MCF 10A (cell line): ENCODE measurements at regions of chr12 and their contacts with region 1.

Region 1: GRCh38 chr12:32455607-32456071 is 56.3 kb downstream of the FGD4 start:
- DNase-seq: peak; percentile 75
- H3K4me3 Mint-ChIP-seq: peak overlapping the region; percentile 48
- H3K27ac Mint-ChIP-seq: peak overlapping the region; percentile 91
- H3K4me1 Mint-ChIP-seq: peaks cover 60% of the 10 kb centered on the region
- H3K27me3 Mint-ChIP-seq: no peaks in the 10 kb centered on the region
- CTCF ChIP-seq: peak; percentile 78

Region 2: DNA sequence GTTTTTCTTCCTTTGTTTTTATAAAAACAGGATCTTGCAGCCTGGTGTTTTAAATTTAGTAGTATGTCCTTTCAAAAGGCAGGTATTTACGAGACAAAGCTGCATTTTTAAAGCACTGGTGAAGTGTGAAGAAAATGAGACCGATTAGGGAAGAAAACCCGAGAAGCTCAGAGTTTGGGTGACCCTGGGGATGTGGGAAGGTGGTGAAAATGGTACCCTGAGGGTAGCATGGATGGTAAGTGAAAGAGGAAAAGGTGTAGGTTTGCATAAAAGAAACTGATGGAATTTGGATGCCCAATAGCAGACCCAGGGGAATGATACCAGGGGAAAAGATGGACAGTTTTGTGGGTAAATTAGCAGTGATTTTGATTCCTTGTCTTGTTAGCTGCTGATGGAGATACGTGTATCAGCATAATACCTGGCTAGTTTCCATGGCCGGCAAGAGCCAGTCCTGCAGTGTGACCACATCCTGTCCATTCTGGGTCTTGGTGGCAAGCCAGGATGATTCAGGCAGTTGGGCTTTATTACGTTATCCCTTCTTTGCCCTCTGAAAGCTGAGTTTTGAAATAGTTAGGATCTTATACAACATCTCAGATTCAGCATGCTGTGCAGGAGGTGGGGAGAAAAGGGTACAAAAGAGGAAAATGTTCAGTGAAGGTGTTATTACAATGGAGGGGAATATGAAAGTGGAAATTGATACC is 340.1 kb before region 1 on chr12:
- CTCF ChIA-PET with region 1: no interaction called
- POLR2A ChIA-PET with region 1: no interaction called
- intact Hi-C with region 1: loop called (anchors 10 kb)
- DNase-seq: peak; percentile 99
- H3K4me3 Mint-ChIP-seq: peak overlapping the region; percentile 5
- H3K27ac Mint-ChIP-seq: peak overlapping the region; percentile 59
- H3K4me1 Mint-ChIP-seq: peaks cover 26% of the 10 kb centered on the region
- H3K27me3 Mint-ChIP-seq: no peaks in the 10 kb centered on the region
- CTCF ChIP-seq: no peak

Region 3: GRCh38 chr12:32399337-32400113 is 56.1 kb before region 1 on chr12 and contains the start of gene FGD4:
- CTCF ChIA-PET with region 1: interaction called, 3 read pairs
- POLR2A ChIA-PET with region 1: interaction called, 63 read pairs
- intact Hi-C with region 1: loop called (anchors 1 kb)
- DNase-seq: peak; percentile 96
- H3K4me3 Mint-ChIP-seq: peak within 1 kb of the TSS; percentile 79
- H3K27ac Mint-ChIP-seq: peak within 1 kb of the TSS; percentile 92
- H3K4me1 Mint-ChIP-seq: peaks cover 19% of the 10 kb centered on the region
- H3K27me3 Mint-ChIP-seq: no peaks in the 10 kb centered on the region
- CTCF ChIP-seq: peak; percentile 41
- total RNA-seq, gene FGD4: 32.5 and 34.7 TPM in 2 replicates

Region 4: DNA sequence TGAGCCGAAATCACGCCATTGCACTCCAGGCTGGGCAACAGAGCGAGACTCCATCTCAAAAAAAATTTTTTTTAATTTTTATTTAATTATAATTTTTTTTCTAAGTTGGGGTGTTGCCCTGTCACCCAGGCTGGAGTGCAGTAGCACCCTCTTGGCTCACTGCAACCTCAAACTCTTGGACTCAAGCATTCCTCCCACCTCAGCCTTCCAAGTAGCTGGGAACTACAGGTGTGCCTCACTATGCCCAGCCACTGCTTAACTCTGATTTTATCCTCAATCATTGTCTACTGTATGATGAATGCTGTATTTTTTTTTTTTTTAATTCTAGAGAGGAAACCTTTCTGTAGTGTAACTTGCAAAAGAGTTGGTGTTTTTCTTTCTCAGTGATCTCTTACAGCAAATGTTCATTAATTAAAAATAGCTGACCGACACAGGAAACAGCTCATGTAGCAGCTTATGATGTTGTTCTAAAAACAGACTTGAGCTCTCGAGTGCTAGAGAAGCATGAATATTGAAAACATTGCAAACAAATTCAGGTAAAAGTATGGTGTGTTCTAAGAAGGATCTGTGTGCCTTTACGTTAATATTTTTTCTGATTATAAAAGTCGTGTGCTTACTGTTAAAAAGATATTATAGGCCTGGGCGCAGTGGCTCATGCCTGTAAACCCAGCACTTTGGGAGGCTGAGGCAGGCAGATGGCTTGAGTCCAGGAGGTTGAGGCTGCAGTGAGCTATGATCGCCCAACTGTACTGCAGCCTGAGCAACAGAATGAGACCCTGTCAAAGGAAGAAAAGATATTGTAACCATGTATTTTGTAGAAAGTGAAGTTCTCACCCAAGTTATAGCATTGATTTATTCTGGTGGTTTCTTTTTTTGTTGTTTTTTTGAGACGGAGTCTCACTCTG is 12.6 kb after region 1 on chr12:
- CTCF ChIA-PET with region 1: interaction called, 4 read pairs
- POLR2A ChIA-PET with region 1: interaction called, 13 read pairs
- intact Hi-C with region 1: no loop called
- DNase-seq: no peak
- H3K4me3 Mint-ChIP-seq: no peak overlapping the region
- H3K27ac Mint-ChIP-seq: no peak overlapping the region
- H3K4me1 Mint-ChIP-seq: peaks cover 6% of the 10 kb centered on the region
- H3K27me3 Mint-ChIP-seq: no peaks in the 10 kb centered on the region
- CTCF ChIP-seq: no peak

Region 5: DNA sequence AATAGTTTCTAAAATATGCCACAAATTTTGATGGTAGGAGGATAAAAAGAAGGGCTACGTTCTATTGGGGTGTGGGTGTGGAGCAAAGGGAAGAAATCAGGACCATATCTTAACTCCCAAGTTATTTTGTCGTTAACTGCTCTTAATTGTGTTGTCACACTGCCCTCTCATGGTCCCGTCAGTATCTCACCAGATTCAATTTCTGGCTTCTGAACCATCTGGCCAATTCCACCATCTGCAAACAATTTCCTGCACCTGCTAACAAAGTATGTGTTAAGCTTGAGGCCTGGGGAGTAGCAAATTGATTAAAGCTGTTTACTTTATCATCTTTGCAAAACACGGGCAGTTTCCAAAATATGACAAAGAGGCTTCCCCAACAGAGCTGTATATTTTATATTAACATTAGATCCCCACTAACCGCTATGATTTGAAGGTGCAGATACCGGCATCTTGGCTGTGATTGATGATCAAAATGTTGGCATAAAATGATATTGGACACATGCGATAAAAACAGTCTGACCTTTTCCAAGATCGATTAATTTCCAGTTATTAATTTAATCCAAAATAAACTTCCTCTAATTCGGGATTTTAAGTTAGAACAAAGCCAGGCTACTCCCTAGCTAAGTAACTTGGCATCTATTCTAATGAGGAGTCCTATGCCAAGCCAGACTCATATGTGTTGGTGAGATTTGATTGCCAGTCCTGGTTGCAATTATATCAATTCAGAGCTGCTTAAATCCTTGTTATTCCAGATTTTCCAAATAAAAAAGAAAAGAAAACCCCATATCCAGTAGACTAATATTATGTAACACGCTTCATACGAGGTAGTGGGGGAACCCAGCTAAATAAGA is 216.5 kb after region 1 on chr12:
- CTCF ChIA-PET with region 1: interaction called, 11 read pairs
- POLR2A ChIA-PET with region 1: no interaction called
- intact Hi-C with region 1: loop called (anchors 1 kb)
- DNase-seq: peak; percentile 70
- H3K4me3 Mint-ChIP-seq: no peak overlapping the region
- H3K27ac Mint-ChIP-seq: no peak overlapping the region
- H3K4me1 Mint-ChIP-seq: no peaks in the 10 kb centered on the region
- H3K27me3 Mint-ChIP-seq: no peaks in the 10 kb centered on the region
- CTCF ChIP-seq: peak; percentile 62

Region 6: DNA sequence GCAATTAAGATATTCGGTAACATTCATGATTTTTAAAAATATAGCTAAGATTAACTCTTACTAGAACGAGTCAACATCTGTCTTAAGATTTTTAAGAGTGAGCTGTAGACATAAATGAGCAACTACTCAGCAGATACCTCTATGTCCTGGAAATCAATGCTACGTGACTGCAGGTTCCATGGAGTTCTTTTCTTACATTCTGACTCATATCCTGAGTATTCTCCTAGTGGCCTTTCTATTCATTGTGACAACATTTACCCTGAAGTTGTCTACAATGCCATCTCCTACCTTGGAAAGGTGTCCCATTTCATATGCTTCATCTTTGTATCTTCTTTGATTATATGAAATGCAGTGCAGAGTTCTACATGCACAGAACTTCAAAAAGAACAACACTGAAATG is 381.1 kb after region 1 on chr12:
- CTCF ChIA-PET with region 1: no interaction called
- POLR2A ChIA-PET with region 1: no interaction called
- intact Hi-C with region 1: no loop called
- DNase-seq: no peak
- H3K4me3 Mint-ChIP-seq: no peak overlapping the region
- H3K27ac Mint-ChIP-seq: no peak overlapping the region
- H3K4me1 Mint-ChIP-seq: peaks cover 4% of the 10 kb centered on the region
- H3K27me3 Mint-ChIP-seq: no peaks in the 10 kb centered on the region
- CTCF ChIP-seq: no peak

Region 7: DNA sequence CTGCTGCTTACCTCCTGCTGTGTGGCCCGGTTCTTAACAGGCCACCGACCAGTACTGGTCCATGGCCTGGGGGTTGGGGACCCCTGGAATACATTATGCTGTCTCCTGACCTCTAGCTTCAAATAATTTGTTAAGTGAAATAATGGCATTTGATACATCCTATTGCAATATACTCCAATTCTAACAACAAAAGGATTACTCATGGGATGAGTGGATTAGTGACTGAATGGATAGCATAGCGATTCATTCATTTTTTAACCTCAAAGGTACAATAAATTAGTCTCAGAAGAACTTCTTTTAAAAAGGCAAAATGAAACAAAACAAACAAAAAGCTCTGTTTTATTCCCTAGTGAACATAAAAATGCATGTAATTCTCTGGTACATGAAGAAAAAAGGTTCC is 588.8 kb after region 1 on chr12:
- CTCF ChIA-PET with region 1: no interaction called
- POLR2A ChIA-PET with region 1: no interaction called
- intact Hi-C with region 1: no loop called
- DNase-seq: no peak
- H3K4me3 Mint-ChIP-seq: no peak overlapping the region
- H3K27ac Mint-ChIP-seq: no peak overlapping the region
- H3K4me1 Mint-ChIP-seq: no peaks in the 10 kb centered on the region
- H3K27me3 Mint-ChIP-seq: no peaks in the 10 kb centered on the region
- CTCF ChIP-seq: no peak